Sigmoid colon (tissue), 7 donors: ENCODE measurements at regions of chr7 and their contacts with region 1.

Region 1: GRCh38 chr7:7681179-7681935 is 37.0 kb downstream of the RPA3 start:
- DNase-seq: no peak
- H3K4me3 ChIP-seq: peak overlapping the region in 2 of 4 donors; percentile 13 to 18
- H3K27ac ChIP-seq: peak overlapping the region in 3 of 4 donors; percentile 33 to 47 (median 43)
- H3K4me1 ChIP-seq: peaks cover 0 to 19% (median 16%) of the 10 kb centered on the region in 4 donors
- H3K27me3 ChIP-seq: no peaks in the 10 kb centered on the region
- CTCF ChIP-seq: peak; percentile 29 to 66 (median 62)
- EP300 ChIP-seq: no peak
- POLR2A ChIP-seq: no peak

Region 2: DNA sequence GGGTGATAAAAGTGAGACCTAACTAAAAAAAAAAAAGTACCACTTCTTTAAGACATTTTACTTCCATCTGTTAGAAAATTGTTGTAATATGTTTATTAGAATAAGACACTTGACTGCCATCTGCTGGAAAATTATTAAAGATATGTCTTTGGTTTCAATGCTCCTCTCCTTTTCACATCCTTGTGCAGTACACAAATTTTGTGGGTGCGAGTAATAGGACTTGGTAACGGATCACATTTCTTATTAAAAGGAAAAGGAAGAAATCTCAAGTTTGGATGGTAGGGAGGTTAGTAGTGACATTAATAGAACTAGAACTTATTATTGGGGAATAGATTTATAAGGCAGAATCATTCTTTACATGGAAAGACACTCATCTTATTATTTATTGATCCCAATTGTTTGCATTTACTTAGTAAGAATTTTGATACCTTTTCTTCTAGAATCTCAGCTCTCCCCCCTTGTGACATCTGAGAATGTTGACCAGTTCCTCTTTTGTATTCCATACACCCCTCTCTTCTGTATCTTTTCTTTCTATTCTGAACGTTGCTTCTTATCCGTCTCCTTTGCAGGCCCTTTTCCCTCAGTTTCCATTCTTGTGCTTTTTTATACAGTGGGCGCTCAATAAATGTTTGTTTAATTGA is 80.1 kb after region 1 on chr7:
- intact Hi-C with region 1: loop called (anchors 2 kb)
- DNase-seq: no peak
- H3K4me3 ChIP-seq: peak overlapping the region in 3 of 4 donors; percentile 36 to 48 (median 44)
- H3K27ac ChIP-seq: peak overlapping the region; percentile 58 to 72 (median 64)
- H3K4me1 ChIP-seq: peaks cover 0 to 37% (median 13%) of the 10 kb centered on the region in 4 donors
- H3K27me3 ChIP-seq: no peaks in the 10 kb centered on the region
- CTCF ChIP-seq: peak in 3 of 4 experiments; percentile 25 to 48 (median 30)
- EP300 ChIP-seq: no peak
- POLR2A ChIP-seq: no peak

Region 3: GRCh38 chr7:7968543-7969305 is 287.4 kb after region 1 on chr7 and contains the start of gene GLCCI1:
- intact Hi-C with region 1: loop called (anchors 5 kb)
- DNase-seq: peak; percentile 98
- H3K4me3 ChIP-seq: peak within 1 kb of the TSS; percentile 87 to 95 (median 92)
- H3K27ac ChIP-seq: peak within 1 kb of the TSS; percentile 89 to 99 (median 97)
- H3K4me1 ChIP-seq: peaks cover 0 to 18% (median 7%) of the 10 kb centered on the region in 4 donors
- H3K27me3 ChIP-seq: no peaks in the 10 kb centered on the region
- CTCF ChIP-seq: no peak
- EP300 ChIP-seq: no peak
- POLR2A ChIP-seq: peak; percentile 58 to 79
- total RNA-seq, gene GLCCI1: 3.8 to 17.7 (median 10.6) TPM

Region 4: DNA sequence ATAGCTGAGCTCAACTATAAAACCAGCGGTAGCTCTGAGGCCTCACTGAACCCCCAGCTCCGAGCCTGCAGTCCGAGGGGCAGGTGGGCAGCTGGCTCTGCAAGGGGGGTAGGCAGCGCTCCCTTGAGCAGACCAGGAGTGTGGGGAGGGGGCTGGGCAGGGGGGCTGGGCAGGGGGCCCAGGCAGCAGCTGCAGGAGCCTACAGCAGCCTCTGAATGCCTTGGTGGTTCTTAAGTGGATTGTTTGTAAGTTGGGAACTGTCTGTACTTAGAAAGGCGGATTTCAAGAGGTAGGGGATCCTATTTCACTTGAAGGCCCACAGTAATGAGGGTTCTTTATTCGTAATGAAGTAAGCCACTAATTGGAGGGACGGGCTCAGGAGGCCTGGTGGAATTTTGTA is 508.3 kb after region 1 on chr7:
- intact Hi-C with region 1: loop called (anchors 5 kb)
- DNase-seq: no peak
- H3K4me3 ChIP-seq: no peak overlapping the region
- H3K27ac ChIP-seq: peak overlapping the region in 1 of 4 donors; percentile 42
- H3K4me1 ChIP-seq: peaks cover 0 to 21% (median 13%) of the 10 kb centered on the region in 4 donors
- H3K27me3 ChIP-seq: no peaks in the 10 kb centered on the region
- CTCF ChIP-seq: no peak
- EP300 ChIP-seq: no peak
- POLR2A ChIP-seq: no peak